ENCODE measurements at regions of chr11 and their contacts with region 1.

Region 1: GRCh38 chr11:6737872-6738466 is 33.8 kb downstream of the OR2AG2 start:
- DNase-seq: peak; percentile 87
- H3K4me3 Mint-ChIP-seq: no peak overlapping the region
- H3K27ac Mint-ChIP-seq: peak overlapping the region; percentile 86
- H3K4me1 Mint-ChIP-seq: peaks cover 92% of the 10 kb centered on the region
- H3K27me3 Mint-ChIP-seq: no peaks in the 10 kb centered on the region

Region 2: DNA sequence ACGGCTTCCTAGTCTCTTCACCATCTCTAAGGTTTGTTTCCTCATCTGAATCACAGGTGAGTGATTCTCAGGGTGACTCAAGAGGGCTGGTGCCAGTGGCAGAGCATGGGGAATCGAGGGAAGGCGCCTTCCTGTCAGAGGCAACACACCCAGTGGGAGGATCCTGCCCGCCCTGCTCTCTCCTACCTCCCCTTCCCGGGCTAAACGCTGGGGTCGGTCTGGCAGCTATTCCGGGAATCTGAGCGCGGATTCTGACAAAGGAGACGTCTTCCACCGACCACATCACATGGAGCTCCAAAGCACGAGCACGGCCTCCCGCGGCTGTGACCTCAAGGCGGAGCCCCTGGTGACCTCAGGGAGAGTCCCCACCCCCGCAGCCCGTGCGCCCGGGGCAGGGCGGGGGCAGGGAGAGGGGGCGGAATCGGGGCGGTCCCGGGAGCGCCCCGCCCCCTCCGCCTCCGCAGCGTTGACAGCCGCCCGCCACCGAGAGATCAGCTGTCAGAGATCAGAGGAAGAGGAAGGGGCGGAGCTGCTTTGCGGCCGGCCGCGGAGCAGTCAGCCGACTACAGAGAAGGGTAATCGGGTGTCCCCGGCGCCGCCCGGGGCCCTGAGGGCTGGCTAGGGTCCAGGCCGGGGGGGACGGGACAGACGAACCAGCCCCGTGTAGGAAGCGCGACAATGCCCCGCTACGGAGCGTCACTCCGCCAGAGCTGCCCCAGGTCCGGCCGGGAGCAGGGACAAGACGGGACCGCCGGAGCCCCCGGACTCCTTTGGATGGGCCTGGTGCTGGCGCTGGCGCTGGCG is 347.8 kb before region 1 on chr11 and contains the start of gene SMPD1:
- CTCF ChIA-PET with region 1: no interaction called
- intact Hi-C with region 1: loop called (anchors 2 kb)
- DNase-seq: peak; percentile 95
- H3K4me3 Mint-ChIP-seq: peak within 1 kb of the TSS; percentile 91
- H3K27ac Mint-ChIP-seq: peak within 1 kb of the TSS; percentile 98
- H3K4me1 Mint-ChIP-seq: peaks cover 46% of the 10 kb centered on the region
- H3K27me3 Mint-ChIP-seq: no peaks in the 10 kb centered on the region
- total RNA-seq, gene SMPD1: 24.5 to 27.5 TPM

Region 3: DNA sequence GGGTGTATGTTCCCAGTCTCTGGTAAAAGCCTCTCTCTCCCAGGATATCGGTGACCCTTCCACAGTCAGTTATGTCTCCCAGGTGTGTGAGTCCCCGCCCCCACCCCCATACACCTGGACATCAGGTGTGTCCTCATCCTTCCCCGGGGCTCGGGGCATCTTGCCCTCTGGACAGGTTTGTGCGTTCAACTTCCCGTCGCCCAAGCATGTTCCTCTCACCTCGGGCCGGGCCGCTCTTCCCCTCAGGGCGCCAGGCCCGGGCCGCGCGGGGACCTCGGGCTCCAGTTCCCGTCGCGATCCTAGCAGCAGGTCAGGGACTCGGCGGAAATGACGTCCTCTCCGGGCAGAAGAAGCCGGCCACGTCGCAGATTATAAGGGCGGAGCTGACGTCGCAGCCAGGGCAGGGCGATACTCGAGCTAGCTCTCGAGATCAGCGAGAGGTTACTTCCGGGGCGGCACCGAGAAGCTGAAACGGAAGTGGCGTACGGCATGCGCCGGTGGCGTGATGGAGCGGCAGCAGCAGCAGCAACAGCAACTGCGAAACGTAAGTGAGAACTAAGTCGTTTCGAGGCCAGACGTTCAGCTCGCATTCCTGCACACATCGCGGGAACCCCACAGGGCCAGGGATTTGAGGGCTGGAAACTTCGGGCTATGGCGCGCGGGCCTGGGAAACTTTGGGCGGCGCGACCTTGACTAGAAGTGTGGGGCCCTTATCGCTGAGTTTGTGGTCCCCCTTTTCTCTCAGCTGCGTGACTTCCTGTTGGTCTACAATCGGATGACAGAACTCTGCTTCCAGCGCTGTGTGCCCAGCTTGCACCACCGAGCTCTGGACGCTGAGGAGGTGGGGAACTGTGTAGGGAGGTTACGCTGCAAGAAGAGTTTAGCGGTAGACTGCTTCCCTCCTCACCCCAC is 256.7 kb before region 1 on chr11 and contains the starts of genes ARFIP2 and TIMM10B:
- CTCF ChIA-PET with region 1: no interaction called
- intact Hi-C with region 1: loop called (anchors 2 kb)
- DNase-seq: peak; percentile 99
- H3K4me3 Mint-ChIP-seq: peak within 1 kb of the TSS; percentile 94
- H3K27ac Mint-ChIP-seq: peak within 1 kb of the TSS; percentile 96
- H3K4me1 Mint-ChIP-seq: peaks cover 38% of the 10 kb centered on the region
- H3K27me3 Mint-ChIP-seq: no peaks in the 10 kb centered on the region
- total RNA-seq, gene ARFIP2: 33.5 to 37.9 TPM
- total RNA-seq, gene TIMM10B: 35.1 to 41.7 TPM

Region 4: GRCh38 chr11:6705905-6706535 is 31.9 kb before region 1 on chr11:
- CTCF ChIA-PET with region 1: interaction called, 8 read pairs
- intact Hi-C with region 1: loop called (anchors 2 kb)
- DNase-seq: peak; percentile 66
- H3K4me3 Mint-ChIP-seq: no peak overlapping the region
- H3K27ac Mint-ChIP-seq: no peak overlapping the region
- H3K4me1 Mint-ChIP-seq: peaks cover 17% of the 10 kb centered on the region
- H3K27me3 Mint-ChIP-seq: no peaks in the 10 kb centered on the region

Region 5: GRCh38 chr11:6757373-6757967 is 19.5 kb after region 1 on chr11:
- CTCF ChIA-PET with region 1: interaction called, 368 read pairs
- intact Hi-C with region 1: loop called (anchors 1 kb)
- DNase-seq: peak; percentile 86
- H3K4me3 Mint-ChIP-seq: no peak overlapping the region
- H3K27ac Mint-ChIP-seq: no peak overlapping the region
- H3K4me1 Mint-ChIP-seq: peaks cover 10% of the 10 kb centered on the region
- H3K27me3 Mint-ChIP-seq: no peaks in the 10 kb centered on the region

Region 6: DNA sequence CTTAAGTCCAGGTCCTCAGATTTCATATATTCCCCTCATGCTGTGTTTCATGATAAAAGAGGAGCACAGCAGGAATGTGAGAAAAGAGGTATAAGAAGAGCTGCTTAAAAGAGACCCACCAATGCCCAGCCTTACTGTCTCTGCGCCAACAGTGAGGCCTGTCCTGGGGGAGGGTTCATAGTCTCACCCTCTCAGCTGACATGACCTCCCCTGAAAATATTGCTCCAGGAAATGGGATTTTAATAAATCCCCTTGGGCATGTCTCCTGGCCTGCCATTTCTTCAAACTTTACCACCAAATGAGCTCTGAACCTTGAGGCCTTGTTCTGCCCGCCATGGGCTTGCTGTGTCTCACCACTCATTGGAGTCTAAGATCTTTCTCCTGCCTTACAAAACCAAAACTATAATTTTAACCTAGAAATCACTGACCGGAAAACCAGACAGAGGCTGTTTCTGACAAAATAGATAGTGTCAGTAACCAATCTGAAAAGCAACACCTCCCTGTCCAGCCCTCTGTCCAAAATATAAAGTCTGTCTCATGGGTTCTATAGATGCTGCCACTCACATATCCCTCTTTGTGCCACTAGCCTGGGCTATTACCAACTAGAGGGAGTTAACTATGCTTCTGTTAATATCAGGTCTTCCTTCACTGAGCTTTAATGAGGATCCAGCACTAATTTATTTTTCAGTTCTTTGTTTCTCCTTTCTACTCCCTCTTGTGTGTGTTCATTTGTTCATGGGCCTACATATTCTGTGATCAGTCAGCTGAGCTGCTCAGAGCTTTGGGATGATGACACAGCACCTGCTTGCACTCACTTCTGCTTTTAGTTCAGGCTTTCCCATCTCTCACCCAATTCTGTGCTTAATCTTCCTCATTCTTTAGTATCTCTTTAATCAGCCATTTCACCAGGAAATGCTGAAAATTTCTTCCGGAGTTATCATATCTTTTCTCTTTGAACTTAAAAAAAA is 34.2 kb after region 1 on chr11 and contains the start of gene OR2AG2:
- CTCF ChIA-PET with region 1: no interaction called
- intact Hi-C with region 1: no loop called
- DNase-seq: no peak
- H3K4me3 Mint-ChIP-seq: no peak within 1 kb of the TSS
- H3K27ac Mint-ChIP-seq: no peak within 1 kb of the TSS
- H3K4me1 Mint-ChIP-seq: no peaks in the 10 kb centered on the region
- H3K27me3 Mint-ChIP-seq: no peaks in the 10 kb centered on the region
- total RNA-seq, gene OR2AG2: 0.05 TPM in 1 of 2 experiments, not detected in the other

Region 7: GRCh38 chr11:6850526-6850925 is 112.6 kb after region 1 on chr11:
- CTCF ChIA-PET with region 1: no interaction called
- intact Hi-C with region 1: no loop called
- DNase-seq: no peak
- H3K4me3 Mint-ChIP-seq: no peak overlapping the region
- H3K27ac Mint-ChIP-seq: no peak overlapping the region
- H3K4me1 Mint-ChIP-seq: no peaks in the 10 kb centered on the region
- H3K27me3 Mint-ChIP-seq: peaks cover 8% of the 10 kb centered on the region

Region 8: GRCh38 chr11:7672960-7673723 is 935.2 kb after region 1 on chr11 and contains the start of gene CYB5R2:
- CTCF ChIA-PET with region 1: no interaction called
- intact Hi-C with region 1: loop called (anchors 5 kb)
- DNase-seq: peak; percentile 17
- H3K4me3 Mint-ChIP-seq: peak within 1 kb of the TSS; percentile 64
- H3K27ac Mint-ChIP-seq: peak within 1 kb of the TSS; percentile 66
- H3K4me1 Mint-ChIP-seq: peaks cover 49% of the 10 kb centered on the region
- H3K27me3 Mint-ChIP-seq: peaks cover 36% of the 10 kb centered on the region
- total RNA-seq, gene CYB5R2: 5.5 to 8.2 TPM

Measured in activated naive CD4-positive, alpha-beta T cell treated with anti-CD3 and anti-CD28 coated beads for 36 hours (primary cell).